ENCODE measurements at regions of chr7 and their contacts with region 1.

Region 1: DNA sequence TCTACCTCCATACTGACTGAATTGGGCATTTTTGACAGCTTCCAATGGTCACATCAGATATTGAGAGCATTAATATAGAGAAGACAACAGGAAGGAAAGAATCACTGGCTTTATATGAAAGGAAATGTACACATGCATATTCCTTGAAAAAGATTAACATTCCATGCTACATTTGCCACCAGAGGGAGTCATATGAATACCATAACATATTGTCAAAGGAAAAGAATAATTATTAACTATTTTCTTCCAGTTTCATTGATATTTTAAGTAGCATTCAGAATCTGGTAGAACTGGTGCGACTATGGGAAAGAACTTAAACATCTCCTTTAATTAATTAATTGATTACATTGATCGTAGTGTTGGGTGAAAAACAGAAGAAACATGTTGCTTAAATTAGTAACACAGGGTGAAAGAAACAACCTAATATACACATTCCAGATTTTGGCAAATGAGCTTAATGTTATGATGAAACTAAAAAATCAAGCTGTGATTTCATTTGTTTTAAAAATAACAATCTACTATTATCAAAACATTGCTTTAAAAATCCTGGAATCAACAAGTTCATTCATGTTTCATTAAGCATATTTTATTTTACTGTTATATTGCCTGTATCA is 71.5 kb downstream of the GPR85 start:
- DNase-seq: no peak
- ATAC-seq: no peak

Region 2: DNA sequence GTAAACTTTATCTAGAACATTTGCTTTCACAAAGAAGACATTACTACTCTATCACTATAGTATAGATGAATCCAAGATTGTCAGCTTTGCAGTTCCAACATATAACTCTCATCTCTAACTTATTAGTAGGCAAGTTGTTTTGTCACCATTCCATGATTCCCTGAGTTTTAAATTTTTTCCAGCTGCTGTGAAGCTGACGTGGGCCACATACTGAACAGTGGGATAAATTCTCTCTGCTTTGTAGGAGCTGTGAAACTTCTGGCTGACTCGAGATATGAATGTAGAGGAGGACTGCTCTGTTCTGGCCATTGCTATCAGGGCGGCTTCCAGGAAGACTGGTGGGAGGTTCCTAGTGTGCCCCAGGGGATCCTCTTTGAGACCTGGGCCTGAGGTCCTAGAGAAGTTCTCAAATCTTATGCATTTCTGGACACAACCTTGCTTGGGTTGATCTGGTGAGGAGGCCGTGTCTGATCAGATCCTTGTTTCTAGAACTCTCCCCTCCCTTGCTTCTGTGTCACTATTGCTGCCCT is 476.3 kb before region 1 on chr7:
- intact Hi-C with region 1: no loop called
- DNase-seq: no peak
- ATAC-seq: no peak

Region 3: GRCh38 chr7:113414401-113415035 is 399.4 kb after region 1 on chr7:
- intact Hi-C with region 1: loop called in 1 of 2 experiments (anchors 5 kb)
- DNase-seq: no peak
- ATAC-seq: no peak